Endothelial cell of umbilical vein (primary cell): ENCODE measurements at regions of chr2 and their contacts with region 1.

Region 1: GRCh38 chr2:189287982-189288521 is 108.5 kb upstream of the COL5A2 start:
- DNase-seq: peak; percentile 82
- H3K4me3 ChIP-seq: no peak overlapping the region
- H3K27ac ChIP-seq: no peak overlapping the region
- H3K4me1 ChIP-seq: peaks cover 6% of the 10 kb centered on the region
- H3K27me3 ChIP-seq: no peaks in the 10 kb centered on the region
- CTCF ChIP-seq: peak; percentile 41
- POLR2A ChIP-seq: no peak

Region 2: DNA sequence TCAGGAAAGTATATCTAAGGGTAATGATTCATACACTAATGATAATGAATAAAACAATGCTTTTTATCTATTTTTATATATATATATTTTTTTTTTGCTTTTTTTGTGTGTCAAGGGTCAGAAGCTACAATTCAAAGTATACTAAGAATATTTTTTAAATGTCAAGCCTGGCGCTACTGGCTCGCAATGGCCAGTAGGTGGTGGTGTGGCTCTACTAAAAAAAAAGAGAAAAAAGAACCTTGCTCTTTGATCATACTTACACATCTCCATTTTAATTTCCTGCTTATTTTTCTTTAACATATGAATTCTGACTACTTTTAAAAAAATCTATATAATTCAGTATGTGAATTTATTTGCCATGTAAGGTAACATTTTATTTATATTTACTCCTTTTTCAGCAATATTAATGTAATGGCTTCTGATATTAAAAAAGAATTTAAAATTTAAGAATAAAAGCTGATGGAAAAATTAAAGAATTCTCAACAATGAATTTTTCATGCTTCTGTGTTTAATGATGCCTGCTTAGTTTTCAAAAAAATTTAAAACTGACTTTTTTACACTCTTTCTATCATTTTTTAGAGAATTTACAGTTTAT is 763.4 kb before region 1 on chr2:
- CTCF ChIA-PET with region 1: interaction called, 31 read pairs
- POLR2A ChIA-PET with region 1: no interaction called
- dilution Hi-C with region 1: no loop called
- intact Hi-C with region 1: loop called (anchors 1 kb)
- DNase-seq: peak; percentile 65
- H3K4me3 ChIP-seq: no peak overlapping the region
- H3K27ac ChIP-seq: no peak overlapping the region
- H3K4me1 ChIP-seq: peaks cover 22% of the 10 kb centered on the region
- H3K27me3 ChIP-seq: no peaks in the 10 kb centered on the region
- CTCF ChIP-seq: peak; percentile 49 to 59
- POLR2A ChIP-seq: no peak

Region 3: DNA sequence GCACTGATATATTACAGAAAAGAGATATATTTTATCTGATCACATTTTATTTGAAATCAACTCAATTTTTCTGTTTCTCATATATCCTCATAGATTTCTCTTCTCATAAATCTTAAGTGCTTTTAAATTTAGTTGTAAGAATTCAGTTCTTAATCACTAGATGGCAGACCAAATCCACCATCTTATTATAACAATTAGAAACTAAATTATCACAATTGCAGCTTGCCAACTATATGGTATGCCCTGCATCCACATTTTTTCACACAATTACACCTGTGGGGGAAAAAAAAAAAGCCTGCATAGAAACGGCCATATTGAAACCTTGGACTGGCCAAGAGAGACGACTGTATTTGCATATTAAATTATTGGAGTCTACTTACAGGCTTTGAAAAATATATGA is 172.9 kb before region 1 on chr2:
- CTCF ChIA-PET with region 1: interaction called, 99 read pairs
- POLR2A ChIA-PET with region 1: no interaction called
- dilution Hi-C with region 1: no loop called
- intact Hi-C with region 1: loop called (anchors 1 kb)
- DNase-seq: peak; percentile 50
- H3K4me3 ChIP-seq: no peak overlapping the region
- H3K27ac ChIP-seq: no peak overlapping the region
- H3K4me1 ChIP-seq: no peaks in the 10 kb centered on the region
- H3K27me3 ChIP-seq: no peaks in the 10 kb centered on the region
- CTCF ChIP-seq: no peak
- POLR2A ChIP-seq: no peak

Region 4: GRCh38 chr2:189142893-189143759 is 144.9 kb before region 1 on chr2:
- CTCF ChIA-PET with region 1: interaction called, 79 read pairs
- POLR2A ChIA-PET with region 1: no interaction called
- dilution Hi-C with region 1: no loop called
- intact Hi-C with region 1: loop called (anchors 1 kb)
- DNase-seq: peak; percentile 49
- H3K4me3 ChIP-seq: no peak overlapping the region
- H3K27ac ChIP-seq: no peak overlapping the region
- H3K4me1 ChIP-seq: no peaks in the 10 kb centered on the region
- H3K27me3 ChIP-seq: no peaks in the 10 kb centered on the region
- CTCF ChIP-seq: peak; percentile 69 to 88
- POLR2A ChIP-seq: no peak

Region 5: DNA sequence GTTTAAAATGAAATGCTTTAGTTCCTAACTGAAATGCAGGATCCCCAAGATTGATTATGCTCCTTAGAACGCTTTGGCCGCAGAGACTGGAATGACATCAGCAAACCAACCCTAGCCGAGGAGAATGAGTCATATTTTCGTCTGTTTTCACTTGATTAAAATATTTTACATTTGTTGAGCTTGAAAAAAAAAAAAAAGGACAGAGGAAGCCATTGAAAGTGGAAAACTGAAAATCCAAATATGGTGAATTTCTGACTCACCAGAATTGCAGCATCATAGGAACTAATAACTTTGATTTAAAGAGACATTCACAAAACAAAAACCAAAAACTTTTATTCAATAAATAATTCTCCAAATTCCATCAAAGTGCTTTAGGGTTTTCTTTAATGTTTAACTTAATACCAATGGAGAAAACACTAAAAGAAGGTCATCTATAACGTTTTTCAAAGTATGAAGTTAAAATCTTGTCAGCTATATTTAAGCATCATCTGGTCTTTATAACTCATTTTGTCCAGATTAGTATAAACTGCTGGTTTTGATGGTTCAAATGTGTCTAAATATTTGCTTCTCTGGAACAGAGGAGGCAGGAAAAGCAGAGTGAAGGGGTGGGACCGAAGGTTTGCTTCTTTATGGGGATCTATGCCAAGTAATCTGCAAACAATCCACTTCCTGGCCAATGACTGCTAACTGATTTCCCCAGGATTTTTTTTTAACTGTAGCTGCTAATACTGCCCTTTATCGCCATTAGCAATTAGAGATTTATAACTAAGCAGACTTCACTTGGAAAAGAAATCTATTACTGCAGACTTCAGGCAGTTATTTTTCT is 77.6 kb before region 1 on chr2:
- CTCF ChIA-PET with region 1: interaction called, 45 read pairs
- POLR2A ChIA-PET with region 1: no interaction called
- dilution Hi-C with region 1: no loop called
- intact Hi-C with region 1: loop called (anchors 5 kb)
- DNase-seq: peak; percentile 94
- H3K4me3 ChIP-seq: peak overlapping the region in 2 of 3 experiments; percentile 16 to 68
- H3K27ac ChIP-seq: peak overlapping the region; percentile 95
- H3K4me1 ChIP-seq: peaks cover 35% of the 10 kb centered on the region
- H3K27me3 ChIP-seq: no peaks in the 10 kb centered on the region
- CTCF ChIP-seq: no peak
- POLR2A ChIP-seq: no peak

Region 6: DNA sequence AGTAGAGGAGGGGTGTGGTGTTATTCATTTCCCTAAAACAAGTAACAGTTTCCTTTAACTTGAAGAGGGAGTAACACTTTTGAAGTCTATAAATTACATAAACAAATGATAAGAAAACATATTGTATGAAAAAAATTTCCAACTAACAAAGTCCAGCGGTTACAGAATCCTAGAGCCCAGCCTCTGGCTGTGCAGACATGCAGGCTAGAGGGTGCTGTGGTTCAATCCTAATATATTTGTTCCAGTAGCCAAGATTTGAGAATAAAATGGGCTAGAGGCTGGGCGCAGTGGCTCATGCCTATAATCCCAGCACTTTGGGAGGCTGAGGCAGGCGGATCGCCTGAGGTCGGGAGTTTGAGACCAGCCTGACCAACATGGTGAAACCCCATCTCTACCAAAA is 210.2 kb after region 1 on chr2:
- CTCF ChIA-PET with region 1: no interaction called
- POLR2A ChIA-PET with region 1: no interaction called
- dilution Hi-C with region 1: no loop called
- intact Hi-C with region 1: no loop called
- DNase-seq: peak; percentile 26
- H3K4me3 ChIP-seq: no peak overlapping the region
- H3K27ac ChIP-seq: no peak overlapping the region
- H3K4me1 ChIP-seq: no peaks in the 10 kb centered on the region
- H3K27me3 ChIP-seq: no peaks in the 10 kb centered on the region
- CTCF ChIP-seq: no peak
- POLR2A ChIP-seq: no peak